ENCODE measurements at regions of chr16 and their contacts with region 1.

Region 1: GRCh38 chr16:62288990-62289629 is 252.9 kb upstream of the CDH8 start:
- DNase-seq: no peak
- ATAC-seq: no peak
- H3K4me3 ChIP-seq: no peak overlapping the region
- H3K4me3 Mint-ChIP-seq: no peak overlapping the region
- H3K27ac ChIP-seq: no peak overlapping the region
- H3K27ac Mint-ChIP-seq: no peak overlapping the region
- H3K4me1 ChIP-seq: no peaks in the 10 kb centered on the region
- H3K4me1 Mint-ChIP-seq: no peaks in the 10 kb centered on the region
- H3K27me3 ChIP-seq: no peaks in the 10 kb centered on the region
- H3K27me3 Mint-ChIP-seq: no peaks in the 10 kb centered on the region
- CTCF ChIP-seq: no peak

Region 2: GRCh38 chr16:62256406-62256805 is 32.7 kb before region 1 on chr16:
- CTCF ChIA-PET with region 1: no interaction called
- POLR2A ChIA-PET with region 1: no interaction called
- intact Hi-C with region 1: no loop called
- DNase-seq: no peak
- ATAC-seq: no peak
- H3K4me3 ChIP-seq: no peak overlapping the region
- H3K4me3 Mint-ChIP-seq: no peak overlapping the region
- H3K27ac ChIP-seq: no peak overlapping the region
- H3K27ac Mint-ChIP-seq: no peak overlapping the region
- H3K4me1 ChIP-seq: no peaks in the 10 kb centered on the region
- H3K4me1 Mint-ChIP-seq: no peaks in the 10 kb centered on the region
- H3K27me3 ChIP-seq: no peaks in the 10 kb centered on the region
- H3K27me3 Mint-ChIP-seq: no peaks in the 10 kb centered on the region
- CTCF ChIP-seq: no peak

Region 3: DNA sequence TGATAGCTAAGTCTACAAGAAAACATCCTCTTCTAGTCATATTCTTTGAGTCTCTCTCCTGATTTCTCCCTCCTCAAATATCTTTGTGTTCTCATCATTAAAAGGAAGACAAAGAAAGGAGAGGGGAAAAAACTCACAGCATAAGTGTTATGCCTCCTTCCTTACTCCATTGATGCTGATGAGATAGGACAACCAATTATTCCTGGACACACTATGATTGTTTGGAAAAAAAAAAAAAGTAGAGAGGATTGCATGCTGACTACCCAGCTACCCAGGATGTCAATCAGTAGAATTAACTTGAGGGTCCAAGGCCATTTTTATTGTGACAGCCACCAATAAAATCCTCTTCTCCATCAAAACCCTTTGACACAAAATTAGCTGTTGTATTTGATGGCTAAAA is 46.2 kb after region 1 on chr16:
- CTCF ChIA-PET with region 1: no interaction called
- POLR2A ChIA-PET with region 1: no interaction called
- intact Hi-C with region 1: no loop called
- DNase-seq: no peak
- ATAC-seq: no peak
- H3K4me3 ChIP-seq: no peak overlapping the region
- H3K4me3 Mint-ChIP-seq: no peak overlapping the region
- H3K27ac ChIP-seq: no peak overlapping the region
- H3K27ac Mint-ChIP-seq: no peak overlapping the region
- H3K4me1 ChIP-seq: no peaks in the 10 kb centered on the region
- H3K4me1 Mint-ChIP-seq: no peaks in the 10 kb centered on the region
- H3K27me3 ChIP-seq: no peaks in the 10 kb centered on the region
- H3K27me3 Mint-ChIP-seq: no peaks in the 10 kb centered on the region
- CTCF ChIP-seq: no peak

Region 4: GRCh38 chr16:62363501-62363900 is 74.4 kb after region 1 on chr16:
- CTCF ChIA-PET with region 1: no interaction called
- POLR2A ChIA-PET with region 1: no interaction called
- intact Hi-C with region 1: loop called in 1 of 2 experiments (anchors 2 kb)
- DNase-seq: no peak
- ATAC-seq: no peak
- H3K4me3 ChIP-seq: no peak overlapping the region
- H3K4me3 Mint-ChIP-seq: no peak overlapping the region
- H3K27ac ChIP-seq: no peak overlapping the region
- H3K27ac Mint-ChIP-seq: no peak overlapping the region
- H3K4me1 ChIP-seq: no peaks in the 10 kb centered on the region
- H3K4me1 Mint-ChIP-seq: no peaks in the 10 kb centered on the region
- H3K27me3 ChIP-seq: no peaks in the 10 kb centered on the region
- H3K27me3 Mint-ChIP-seq: no peaks in the 10 kb centered on the region
- CTCF ChIP-seq: no peak

Measured in CD8-positive, alpha-beta T cell (primary cell).